Dorsolateral prefrontal cortex (tissue), 120 donors: ENCODE measurements at regions of chr22 and their contacts with region 1.

Region 1: DNA sequence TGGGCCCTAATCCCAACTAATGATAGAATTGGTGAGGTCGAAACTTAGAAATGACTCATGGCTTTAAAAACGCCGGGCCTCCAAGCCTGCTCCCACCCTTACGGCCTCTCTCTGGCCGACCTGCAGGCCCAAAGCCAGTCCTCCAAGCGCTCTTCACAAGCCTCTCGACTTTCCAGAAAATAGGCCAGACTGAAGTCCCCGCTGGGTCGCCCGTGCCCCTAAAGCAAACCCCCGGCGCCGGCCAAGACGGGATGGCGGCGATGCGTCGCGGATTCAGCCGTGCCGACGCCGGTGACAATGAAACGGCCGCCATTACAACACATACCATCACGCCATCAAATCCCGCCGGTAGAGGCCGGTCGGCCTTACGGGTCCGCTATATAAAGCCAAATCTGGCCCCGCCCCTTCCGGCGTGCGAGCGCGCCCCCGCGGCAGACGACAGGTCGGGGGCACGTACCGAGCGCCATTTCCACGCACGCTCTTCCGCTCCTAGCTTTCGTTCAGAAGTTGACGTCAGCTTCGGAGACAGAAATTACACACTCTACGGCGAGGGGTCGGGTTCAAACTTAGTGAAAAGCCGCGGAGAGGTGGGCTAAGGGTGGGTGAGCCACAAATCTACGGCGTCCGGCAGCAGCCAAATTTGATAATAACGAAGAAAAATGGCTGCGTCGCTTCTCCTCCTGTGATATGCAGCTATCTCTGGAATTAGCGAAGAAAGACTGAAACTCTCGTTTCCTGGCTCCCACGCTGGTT is at the start of gene RPL3:
- DNase-seq: peak; percentile 96 to 98 (median 97)
- H3K4me3 ChIP-seq: peak within 1 kb of the TSS; percentile 60 to 95 (median 79)
- H3K27ac ChIP-seq: peak within 1 kb of the TSS; percentile 91 to 100 (median 99)
- H3K27me3 ChIP-seq: no peaks in the 10 kb centered on the region
- CTCF ChIP-seq: peak in 48 of 56 donors; percentile 25 to 72 (median 50)
- total RNA-seq, gene RPL3: 562 to 963 (median 699) TPM

Region 2: DNA sequence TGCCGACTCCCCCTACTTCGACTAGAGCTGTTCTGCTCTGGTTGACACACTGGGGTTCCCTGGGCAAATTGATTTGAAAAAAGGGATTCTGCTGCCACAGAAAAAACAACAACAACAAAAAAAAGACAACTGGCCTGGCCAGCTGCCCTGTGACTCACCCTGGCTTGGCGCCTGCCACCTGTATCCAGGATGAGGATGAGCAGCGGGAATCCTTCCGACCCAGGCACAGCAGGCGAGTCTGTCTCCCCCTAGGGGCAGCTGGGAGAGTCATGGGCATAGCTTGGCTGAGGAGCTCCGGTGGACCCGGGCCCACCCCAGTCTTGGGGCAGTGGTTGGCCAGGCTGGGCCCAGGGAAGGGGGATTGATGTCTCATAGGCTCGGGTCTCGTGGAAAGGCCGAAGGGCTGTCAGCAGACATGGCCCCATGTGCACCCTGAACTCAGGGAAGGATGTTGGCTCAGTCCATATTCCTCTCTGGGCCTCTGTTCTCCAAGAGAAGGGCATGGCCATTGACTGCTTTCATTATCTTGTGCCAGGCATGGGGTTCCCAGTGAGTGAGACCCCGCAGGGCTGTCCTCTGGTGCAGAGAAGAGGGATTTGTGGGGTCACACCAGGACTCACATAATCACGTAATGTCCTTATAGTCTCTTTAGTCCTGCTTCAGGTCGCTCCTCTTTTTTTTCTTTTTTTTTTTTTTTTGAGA is 553.2 kb before region 1 on chr22:
- intact Hi-C with region 1: loop called (anchors 10 kb)
- DNase-seq: peak in 9 of 10 donors; percentile 56 to 87 (median 77)
- H3K4me3 ChIP-seq: peak overlapping the region in 1 of 59 donors; percentile 31
- H3K27ac ChIP-seq: peak overlapping the region in 58 of 59 donors; percentile 40 to 99 (median 84)
- H3K27me3 ChIP-seq: no peaks in the 10 kb centered on the region
- CTCF ChIP-seq: peak; percentile 42 to 93 (median 78)

Region 3: DNA sequence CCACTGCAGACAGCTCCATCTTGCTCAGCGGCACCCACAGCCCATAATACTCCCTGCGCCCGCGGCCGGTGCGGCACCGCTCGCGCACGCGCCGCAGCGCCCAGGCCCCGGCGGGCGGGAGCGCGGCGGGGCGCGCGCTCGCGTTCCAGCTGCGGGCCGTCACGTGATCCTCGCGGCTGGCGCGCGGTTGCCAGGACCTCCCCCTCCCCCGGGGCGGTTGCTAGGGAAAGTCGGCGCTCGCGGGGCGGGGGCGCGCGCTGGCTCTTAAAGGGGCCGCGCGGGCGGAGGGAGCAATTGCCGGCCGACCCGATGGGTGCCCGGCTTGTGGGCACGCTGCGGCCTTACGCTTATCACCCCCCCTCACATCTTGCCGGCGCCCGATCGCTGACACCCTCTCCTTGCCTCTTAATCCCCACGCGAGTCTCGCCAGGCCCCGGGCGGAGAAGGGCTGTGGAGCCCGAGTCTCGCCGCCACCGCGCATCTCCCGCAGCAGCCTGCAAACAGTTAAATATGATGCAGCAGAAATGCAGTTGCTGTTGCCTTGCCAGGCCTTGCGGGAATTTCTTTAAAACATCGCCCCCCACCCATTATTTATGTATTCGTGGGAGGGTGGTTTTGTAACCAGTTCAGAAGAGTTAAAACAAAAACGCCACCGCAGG is 447.1 kb before region 1 on chr22 and contains the start of gene CBX6:
- intact Hi-C with region 1: loop called (anchors 2 to 5 kb)
- DNase-seq: peak; percentile 91 to 96 (median 94)
- H3K4me3 ChIP-seq: peak within 1 kb of the TSS; percentile 60 to 98 (median 85)
- H3K27ac ChIP-seq: peak within 1 kb of the TSS; percentile 86 to 100 (median 99)
- H3K27me3 ChIP-seq: no peaks in the 10 kb centered on the region
- CTCF ChIP-seq: peak in 4 of 56 donors; percentile 3 to 17 (median 7)
- total RNA-seq, gene CBX6: 99.9 to 293 (median 188) TPM

Region 4: GRCh38 chr22:39170825-39171622 is 148.4 kb before region 1 on chr22:
- intact Hi-C with region 1: loop called (anchors 1 to 2 kb)
- DNase-seq: peak; percentile 76 to 93 (median 84)
- H3K4me3 ChIP-seq: peak overlapping the region in 41 of 59 donors; percentile 1 to 57 (median 29)
- H3K27ac ChIP-seq: peak overlapping the region in 4 of 59 donors; percentile 6 to 28 (median 24)
- H3K27me3 ChIP-seq: no peaks in the 10 kb centered on the region
- CTCF ChIP-seq: peak; percentile 95 to 99 (median 98)

Region 5: DNA sequence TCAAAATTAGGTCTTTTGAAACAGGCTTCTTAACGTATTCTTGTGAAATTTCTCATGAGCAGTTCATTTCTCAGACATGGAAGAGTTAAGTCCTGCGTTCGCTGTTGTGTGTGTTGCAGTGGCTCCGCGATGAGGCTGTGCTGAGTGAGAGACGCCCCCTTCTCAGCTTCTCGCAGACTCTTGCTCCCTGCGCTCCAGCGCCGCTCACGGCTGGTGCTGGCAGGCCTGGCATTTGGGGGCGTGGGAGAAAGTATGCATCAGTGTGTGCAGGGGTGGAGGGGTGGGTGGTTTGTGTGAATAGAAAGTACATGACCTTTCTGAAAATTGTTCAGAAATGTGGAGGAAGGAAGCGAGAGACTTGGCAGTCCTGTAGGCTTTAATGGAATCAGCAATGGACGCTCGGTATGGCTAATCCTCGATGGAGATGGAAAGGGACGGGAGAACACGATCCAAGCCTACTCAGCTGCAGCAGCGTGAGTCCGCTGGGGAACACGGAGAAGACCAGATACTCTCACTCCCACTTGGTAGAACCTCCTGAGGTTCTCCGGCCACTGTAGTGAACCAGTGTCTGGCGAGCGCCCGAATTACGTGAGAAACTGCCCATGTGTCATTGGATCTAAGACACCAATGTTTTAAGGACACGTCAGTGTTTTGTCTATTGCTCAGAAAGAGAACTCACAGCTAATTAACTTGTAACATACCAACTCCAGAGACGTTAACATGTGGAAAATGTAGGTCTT is 86.1 kb after region 1 on chr22:
- intact Hi-C with region 1: loop called in 1 of 2 experiments (anchors 5 kb)
- DNase-seq: peak; percentile 56 to 88 (median 80)
- H3K4me3 ChIP-seq: peak overlapping the region in 54 of 59 donors; percentile 0 to 55 (median 34)
- H3K27ac ChIP-seq: peak overlapping the region in 58 of 59 donors; percentile 36 to 90 (median 81)
- H3K27me3 ChIP-seq: no peaks in the 10 kb centered on the region
- CTCF ChIP-seq: peak in 38 of 56 donors; percentile 5 to 53 (median 28)